Activated naive CD4-positive, alpha-beta T cell treated with anti-CD3 and anti-CD28 coated beads, Interleukin-2, amount 10 ng/mL, durations not matched to agents 7 days and 5 days (primary cell): ENCODE measurements at regions of chr17 and their contacts with region 1.

Region 1: GRCh38 chr17:21457051-21458026 is 81.2 kb downstream of the KCNJ12 start:
- DNase-seq: peak; percentile 93
- H3K4me3 Mint-ChIP-seq: peak overlapping the region; percentile 21
- H3K27ac Mint-ChIP-seq: peak overlapping the region; percentile 47
- H3K4me1 Mint-ChIP-seq: peaks cover 23% of the 10 kb centered on the region
- H3K27me3 Mint-ChIP-seq: peaks cover 59% of the 10 kb centered on the region

Region 2: GRCh38 chr17:21379080-21379711 is 78.1 kb before region 1 on chr17:
- CTCF ChIA-PET with region 1: no interaction called
- DNase-seq: no peak
- H3K4me3 Mint-ChIP-seq: no peak overlapping the region
- H3K27ac Mint-ChIP-seq: no peak overlapping the region
- H3K4me1 Mint-ChIP-seq: peaks cover 2% of the 10 kb centered on the region
- H3K27me3 Mint-ChIP-seq: peaks cover 61% of the 10 kb centered on the region

Region 3: DNA sequence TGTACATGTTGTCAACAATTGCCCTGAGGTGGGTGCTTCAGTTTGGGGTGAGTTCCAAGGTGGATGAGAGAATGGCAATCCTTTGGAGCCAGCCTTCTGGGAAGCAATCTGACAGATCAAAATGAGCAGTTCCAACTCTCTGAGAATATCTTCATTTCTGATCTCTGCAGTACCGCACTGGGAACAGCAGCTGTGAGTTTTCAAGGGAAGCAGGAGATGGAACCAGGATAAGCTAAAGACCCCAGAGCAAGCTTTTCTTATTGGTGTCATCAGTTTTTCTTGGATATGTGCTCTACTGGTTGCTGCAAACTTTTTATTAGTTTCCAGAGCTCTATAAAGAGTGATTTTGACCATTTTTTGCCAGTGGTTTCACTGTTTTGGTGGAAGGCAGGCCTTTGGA is 13.5 kb after region 1 on chr17:
- CTCF ChIA-PET with region 1: interaction called, 14 read pairs
- DNase-seq: no peak
- H3K4me3 Mint-ChIP-seq: no peak overlapping the region
- H3K27ac Mint-ChIP-seq: no peak overlapping the region
- H3K4me1 Mint-ChIP-seq: no peaks in the 10 kb centered on the region
- H3K27me3 Mint-ChIP-seq: peaks cover 37% of the 10 kb centered on the region

Region 4: GRCh38 chr17:21511363-21512198 is 54.2 kb after region 1 on chr17:
- CTCF ChIA-PET with region 1: interaction called, 70 read pairs
- DNase-seq: peak; percentile 76
- H3K4me3 Mint-ChIP-seq: peak overlapping the region; percentile 45
- H3K27ac Mint-ChIP-seq: no peak overlapping the region
- H3K4me1 Mint-ChIP-seq: peaks cover 23% of the 10 kb centered on the region
- H3K27me3 Mint-ChIP-seq: peaks cover 58% of the 10 kb centered on the region